ENCODE measurements at regions of chr7 and their contacts with region 1.

Region 1: GRCh38 chr7:131945313-131945911 is 389.0 kb upstream of the PODXL start:
- DNase-seq: no peak
- ATAC-seq: peak; percentile 14

Region 2: DNA sequence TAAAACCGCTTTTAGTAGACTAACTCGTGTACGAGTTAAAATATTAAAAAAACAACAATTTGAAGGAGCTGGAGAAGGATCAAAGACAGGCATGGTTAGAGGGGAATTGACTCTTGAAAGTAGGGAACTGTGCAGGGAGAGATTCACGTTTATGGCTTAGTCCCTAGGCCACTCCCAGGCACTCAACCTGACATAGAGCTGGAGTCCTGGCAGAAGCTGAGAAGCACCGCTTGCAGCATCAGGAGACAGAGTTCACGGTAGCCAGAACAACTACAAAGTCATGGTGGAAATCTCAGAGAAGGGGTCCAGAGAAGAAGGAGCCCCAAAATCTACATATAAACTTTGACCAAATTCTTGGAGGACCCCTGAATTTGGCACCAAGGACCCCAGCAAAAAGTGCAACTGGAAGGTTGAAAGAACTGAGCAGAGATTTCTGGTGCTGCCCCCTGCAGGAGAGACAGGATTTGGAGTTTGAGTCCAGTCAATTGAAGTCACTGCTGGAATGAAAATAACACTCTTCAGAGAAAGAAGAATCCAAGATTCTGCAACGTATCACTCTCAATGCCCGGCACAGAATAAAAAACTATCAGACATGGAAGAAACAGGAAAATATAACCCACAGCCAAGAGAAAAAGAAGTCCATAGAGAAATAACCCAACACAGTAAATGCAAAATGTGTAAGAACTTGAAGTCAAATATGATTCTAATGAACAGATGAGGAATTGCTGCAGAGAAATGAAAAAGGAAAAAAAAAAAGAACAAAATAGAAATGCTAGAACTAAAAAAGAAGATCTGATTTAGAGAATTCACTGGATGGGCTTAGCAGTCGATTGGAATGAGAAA is 104.3 kb after region 1 on chr7:
- intact Hi-C with region 1: loop called (anchors 5 kb)
- DNase-seq: no peak
- ATAC-seq: no peak

Region 3: GRCh38 chr7:132117211-132117610 is 171.8 kb after region 1 on chr7:
- intact Hi-C with region 1: no loop called
- DNase-seq: no peak
- ATAC-seq: no peak

Measured in Right ventricle myocardium inferior (tissue), 1 donor.